Gastrocnemius medialis (tissue), 4 donors: ENCODE measurements at regions of chr2 and their contacts with region 1.

Region 1: DNA sequence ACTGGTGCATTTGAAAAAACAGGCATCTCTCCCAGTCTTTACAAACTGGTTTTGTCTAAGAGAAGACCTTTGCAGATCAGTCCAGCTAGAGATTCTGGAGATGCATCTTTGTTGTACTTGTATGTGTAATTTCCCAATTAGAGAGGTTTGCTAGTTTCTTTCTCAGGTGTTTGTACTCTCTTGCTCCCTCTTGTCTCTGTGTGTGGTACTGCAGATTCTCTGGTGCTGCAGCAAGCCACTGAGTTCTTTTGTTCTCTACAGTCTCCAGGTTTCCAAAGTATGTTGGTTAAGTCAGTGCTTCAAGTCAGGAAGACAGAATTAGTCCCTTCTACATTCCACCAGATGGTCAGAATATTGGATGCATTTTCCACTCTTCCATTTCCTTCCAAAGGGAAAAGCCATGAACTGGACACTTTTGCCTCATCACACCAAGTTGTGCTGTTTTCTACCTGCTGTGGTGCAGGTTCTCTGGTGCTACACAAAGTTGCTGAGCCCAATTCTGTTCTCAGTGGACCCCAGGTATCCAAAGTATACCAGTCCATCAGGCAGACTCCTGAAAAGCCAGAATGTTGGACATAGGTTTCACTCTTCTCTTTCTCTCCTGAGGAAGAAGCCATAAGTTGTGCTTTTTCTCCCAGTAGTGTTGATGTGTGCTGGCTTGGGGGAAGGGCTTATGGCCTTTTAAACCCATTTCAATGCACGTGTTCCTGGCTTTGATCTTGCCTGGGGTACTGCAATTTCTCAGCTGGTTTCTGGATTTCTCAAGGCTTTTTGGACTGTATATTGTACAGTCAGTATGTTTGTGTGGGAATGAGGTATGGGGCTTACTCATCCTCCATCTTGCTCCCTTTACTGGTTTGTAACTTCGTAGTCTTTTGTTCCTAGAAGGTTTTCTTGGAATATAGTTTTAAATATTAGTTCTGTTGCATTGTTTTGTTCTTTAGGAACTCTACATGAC is 29.8 kb downstream of the EPC2 start:
- DNase-seq: no peak
- ATAC-seq: no peak
- H3K4me3 ChIP-seq: no peak overlapping the region
- H3K27ac ChIP-seq: no peak overlapping the region
- H3K4me1 ChIP-seq: peaks cover 34 to 39% of the 10 kb centered on the region in 2 donors
- H3K27me3 ChIP-seq: no peaks in the 10 kb centered on the region
- CTCF ChIP-seq: peak in 2 of 5 experiments; percentile 19 to 44
- POLR2A ChIP-seq: no peak

Region 2: DNA sequence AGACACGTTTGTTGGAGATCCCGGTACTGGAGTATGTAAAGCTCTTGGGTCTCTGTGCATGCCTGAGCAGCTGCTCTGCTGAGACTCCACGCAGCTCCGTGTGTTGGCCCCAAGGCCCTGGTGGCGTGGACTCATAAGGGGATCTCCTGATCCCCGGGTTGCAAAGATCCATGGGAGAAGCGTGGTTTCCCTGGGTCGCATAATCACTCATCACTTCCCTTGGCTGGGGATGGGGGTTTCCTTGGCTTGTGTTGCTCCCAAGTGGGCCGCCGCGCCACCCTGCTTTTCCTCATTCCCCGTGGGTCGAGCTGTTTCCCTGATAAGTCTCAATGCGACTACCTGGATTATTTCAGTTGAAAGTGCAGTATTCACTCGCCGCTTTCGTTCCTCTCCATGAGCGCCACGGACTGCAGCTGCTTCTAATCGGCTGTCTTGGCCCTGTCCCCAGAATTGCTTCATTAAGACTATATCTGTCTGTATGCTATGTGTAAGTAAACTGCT is 46.2 kb after region 1 on chr2:
- in situ Hi-C with region 1: no loop called
- intact Hi-C with region 1: loop called (anchors 5 kb)
- DNase-seq: peak; percentile 9 to 23
- ATAC-seq: peak; percentile 52 to 80
- H3K4me3 ChIP-seq: peak overlapping the region; percentile 22 to 53 (median 32)
- H3K27ac ChIP-seq: peak overlapping the region; percentile 6 to 29 (median 16)
- H3K4me1 ChIP-seq: peaks cover 34 to 45% of the 10 kb centered on the region in 2 donors
- H3K27me3 ChIP-seq: no peaks in the 10 kb centered on the region
- CTCF ChIP-seq: no peak
- POLR2A ChIP-seq: no peak